Mucosa of descending colon (tissue), 3 donors: ENCODE measurements at regions of chr10 and their contacts with region 1.

Region 1: DNA sequence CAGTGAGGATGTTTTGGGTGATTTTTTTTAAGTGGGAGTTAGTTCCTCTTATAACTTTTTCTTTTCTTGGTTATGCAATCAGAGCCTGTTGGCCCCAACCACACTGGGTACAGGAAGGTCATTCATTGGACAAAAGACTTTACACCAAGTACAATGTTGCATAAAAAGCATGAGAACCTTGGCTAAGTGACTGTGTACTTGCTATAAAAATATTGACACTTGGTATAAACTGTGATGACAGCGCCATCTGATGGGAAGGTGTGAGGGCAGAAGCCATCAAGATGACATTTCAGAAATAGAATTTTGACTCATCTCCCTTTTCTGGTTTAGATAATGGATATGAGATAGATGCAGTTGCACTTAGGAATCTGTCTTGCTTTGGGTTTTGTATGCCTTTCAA is 126.4 kb upstream of the CCDC6 start:
- DNase-seq: peak in 1 of 3 donors; percentile 89
- ATAC-seq: peak; percentile 87
- H3K4me3 ChIP-seq: no peak overlapping the region
- H3K4me1 ChIP-seq: no peaks in the 10 kb centered on the region
- CTCF ChIP-seq: no peak

Region 2: DNA sequence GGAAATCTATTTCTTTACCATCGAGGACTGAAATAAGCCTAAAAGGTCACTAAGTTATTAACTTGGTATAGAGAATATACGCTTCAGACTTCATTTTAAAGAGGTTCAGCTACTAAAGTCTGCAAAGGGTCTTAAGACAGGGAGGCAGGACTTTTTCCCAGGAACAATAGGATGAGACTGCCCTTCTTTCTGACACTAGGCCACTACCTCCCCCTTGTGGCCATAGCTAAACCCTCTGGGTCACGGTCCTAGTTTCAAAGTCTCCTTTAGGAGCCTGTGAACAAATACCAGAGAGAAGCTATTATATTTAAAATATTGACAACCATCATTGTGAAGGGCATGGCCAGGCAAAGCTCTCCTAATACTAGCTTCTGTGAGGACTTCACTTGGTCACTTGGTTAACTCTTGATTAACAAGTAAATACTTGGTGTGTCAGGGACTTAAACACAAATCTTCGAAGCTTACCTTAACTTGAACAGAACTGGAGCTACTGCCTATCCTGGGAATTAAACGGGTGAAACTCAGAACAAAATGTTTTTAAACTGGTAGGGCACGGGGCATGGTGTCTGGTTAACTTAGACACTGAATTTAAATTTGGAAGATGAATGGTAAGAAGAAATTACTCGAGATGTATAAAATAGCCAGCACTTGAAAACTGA is 202.0 kb before region 1 on chr10:
- intact Hi-C with region 1: loop called in 1 of 2 experiments (anchors 10 kb)
- DNase-seq: peak in 1 of 3 donors; percentile 72
- ATAC-seq: peak; percentile 65
- H3K4me3 ChIP-seq: no peak overlapping the region
- H3K4me1 ChIP-seq: no peaks in the 10 kb centered on the region
- CTCF ChIP-seq: peak; percentile 54

Region 3: DNA sequence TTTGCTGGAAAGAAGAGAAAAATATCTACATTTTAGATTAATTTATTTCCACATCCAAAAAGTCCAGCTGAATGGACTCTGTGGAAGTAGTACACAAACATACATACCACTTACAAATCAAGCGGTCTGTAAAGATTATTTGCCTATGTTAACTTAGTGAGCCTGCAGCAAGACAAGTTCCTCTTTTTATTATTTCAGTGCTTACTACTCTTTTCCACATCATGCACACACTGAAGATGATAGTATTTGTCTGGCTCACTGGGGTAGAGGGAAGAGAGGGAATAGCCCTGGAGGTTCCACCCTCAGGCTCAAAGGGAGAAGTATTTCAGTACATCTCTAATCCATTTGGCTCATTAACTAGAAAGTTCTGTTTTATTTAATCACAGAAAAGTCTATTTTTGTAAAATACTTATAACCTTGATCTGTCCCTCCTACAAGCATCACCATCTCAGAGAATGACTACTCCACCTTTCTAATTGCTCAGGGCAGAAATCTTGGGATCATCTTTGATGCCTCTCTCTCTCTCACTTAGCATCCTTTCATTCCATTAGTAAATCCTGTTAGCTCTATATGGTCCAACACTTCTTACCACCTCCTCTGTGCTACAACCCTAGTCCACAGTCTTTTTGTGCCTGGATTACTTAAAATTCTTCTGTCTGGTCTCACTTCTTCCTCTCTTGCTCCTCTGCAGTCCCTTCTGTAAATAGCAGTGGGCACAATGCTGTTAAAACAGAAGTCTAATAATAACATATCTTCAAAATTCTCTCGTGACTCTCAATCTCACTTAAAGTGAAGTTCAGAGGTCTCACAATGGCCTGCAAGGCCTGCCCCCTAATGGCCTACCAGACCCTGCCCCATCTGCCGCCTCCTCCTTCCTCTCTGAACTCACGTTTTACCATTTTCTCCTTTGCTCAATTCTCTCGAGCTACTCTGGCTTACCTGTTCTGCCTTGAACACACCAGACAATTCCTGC is 62.0 kb before region 1 on chr10:
- intact Hi-C with region 1: no loop called
- DNase-seq: no peak
- ATAC-seq: no peak
- H3K4me3 ChIP-seq: no peak overlapping the region
- H3K4me1 ChIP-seq: peaks cover 4% of the 10 kb centered on the region
- CTCF ChIP-seq: no peak